Dorsolateral prefrontal cortex (tissue), 120 donors: ENCODE measurements at regions of chr18 and their contacts with region 1.

Region 1: DNA sequence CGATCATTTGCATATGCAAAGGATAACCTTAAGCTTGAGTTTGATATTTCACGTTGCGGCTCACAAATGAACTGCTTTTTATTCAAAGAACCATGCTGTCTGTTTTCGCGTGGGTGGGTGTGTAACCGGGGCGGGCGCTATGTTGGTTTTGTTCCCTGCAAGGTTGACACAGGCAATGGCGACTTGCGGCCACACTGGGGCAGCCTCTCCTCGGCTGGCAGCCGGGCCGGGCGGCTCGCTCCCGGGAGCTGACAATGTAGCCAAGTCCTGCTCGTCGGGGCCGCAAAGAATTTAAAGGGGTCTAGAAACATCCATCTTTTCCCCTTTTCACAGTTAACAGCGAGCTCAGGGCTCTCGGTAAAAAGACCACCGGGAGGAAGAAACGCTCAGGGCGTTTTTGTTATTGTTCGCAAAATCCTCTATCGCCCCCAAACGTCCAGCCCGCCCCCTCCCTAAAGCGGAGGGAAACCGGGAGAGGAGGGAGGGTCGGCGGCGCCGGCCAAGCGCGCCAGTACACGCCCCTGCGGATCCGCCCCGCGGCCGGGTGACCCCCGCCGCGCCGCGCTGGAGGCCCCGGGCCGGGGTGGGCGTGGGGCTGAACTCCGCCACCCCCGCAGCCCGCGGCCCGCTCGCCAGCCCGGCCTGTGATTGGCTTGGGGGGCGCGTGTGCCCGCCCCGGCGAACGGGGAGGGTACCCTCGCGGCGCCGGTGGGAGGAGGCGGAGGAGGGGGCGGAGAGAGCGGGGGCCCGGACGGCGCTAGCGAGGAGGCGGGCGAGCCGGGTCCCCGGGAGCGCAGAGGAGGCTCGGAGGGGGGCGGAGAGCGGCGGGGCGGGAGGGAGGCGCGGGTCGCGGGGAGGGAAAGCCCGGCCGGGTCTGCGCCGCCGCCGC is at the start of gene NEDD4L:
- DNase-seq: peak; percentile 69 to 91 (median 87)
- H3K4me3 ChIP-seq: peak within 1 kb of the TSS; percentile 60 to 90 (median 82)
- H3K27ac ChIP-seq: peak within 1 kb of the TSS in 57 of 59 donors; percentile 39 to 94 (median 85)
- H3K27me3 ChIP-seq: peaks cover 0 to 28% (median 0%) of the 10 kb centered on the region in 45 donors
- CTCF ChIP-seq: peak; percentile 58 to 96 (median 90)
- total RNA-seq, gene NEDD4L: 54.4 to 214 (median 149) TPM

Region 2: GRCh38 chr18:57630002-57630753 is 413.6 kb before region 1 on chr18:
- intact Hi-C with region 1: loop called (anchors 10 kb)
- DNase-seq: peak; percentile 95 to 98 (median 96)
- H3K4me3 ChIP-seq: peak overlapping the region; percentile 48 to 98 (median 79)
- H3K27ac ChIP-seq: peak overlapping the region; percentile 14 to 97 (median 86)
- H3K27me3 ChIP-seq: no peaks in the 10 kb centered on the region
- CTCF ChIP-seq: peak; percentile 38 to 90 (median 81)

Region 3: GRCh38 chr18:57915865-57916582 is 127.7 kb before region 1 on chr18:
- intact Hi-C with region 1: loop called (anchors 10 kb)
- DNase-seq: peak; percentile 58 to 87 (median 82)
- H3K4me3 ChIP-seq: no peak overlapping the region
- H3K27ac ChIP-seq: peak overlapping the region in 56 of 59 donors; percentile 8 to 87 (median 70)
- H3K27me3 ChIP-seq: no peaks in the 10 kb centered on the region
- CTCF ChIP-seq: peak in 10 of 56 donors; percentile 8 to 41 (median 18)

Region 4: DNA sequence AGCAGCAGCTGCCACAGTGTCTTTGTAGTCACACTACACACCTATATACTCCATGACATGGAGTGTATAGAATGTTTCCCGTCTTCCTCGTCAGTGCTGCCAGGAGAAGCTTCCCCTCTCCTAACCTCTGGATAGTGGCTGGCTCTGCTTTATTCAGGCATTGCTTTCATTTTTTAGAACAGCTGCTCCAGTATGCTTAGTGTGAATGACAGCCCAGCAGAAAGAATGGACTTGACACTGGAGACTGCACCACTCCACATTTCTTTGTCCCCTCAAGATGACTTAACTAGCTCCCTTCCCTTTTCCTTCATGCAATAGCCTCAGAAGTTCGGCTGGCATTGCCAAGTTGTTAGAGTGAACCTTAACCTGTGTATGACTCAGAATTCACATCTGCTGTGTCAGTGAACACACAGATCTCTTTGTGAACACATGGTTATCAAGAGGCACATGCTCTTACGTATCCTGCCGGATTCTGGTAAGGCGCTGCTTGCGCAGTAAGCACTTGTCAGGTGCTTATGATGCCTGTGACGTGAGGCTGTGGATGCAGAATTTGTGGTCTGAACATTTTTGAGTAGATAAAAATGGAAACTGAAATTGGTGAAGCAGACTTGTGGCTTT is 74.2 kb after region 1 on chr18:
- intact Hi-C with region 1: loop called (anchors 2 to 5 kb)
- DNase-seq: peak in 3 of 10 donors; percentile 23 to 63 (median 50)
- H3K4me3 ChIP-seq: no peak overlapping the region
- H3K27ac ChIP-seq: peak overlapping the region in 10 of 59 donors; percentile 14 to 51 (median 30)
- H3K27me3 ChIP-seq: peaks cover 0 to 14% (median 0%) of the 10 kb centered on the region in 45 donors
- CTCF ChIP-seq: no peak

Region 5: GRCh38 chr18:58180738-58181353 is 137.1 kb after region 1 on chr18:
- intact Hi-C with region 1: loop called in 1 of 2 experiments (anchors 5 kb)
- DNase-seq: peak in 3 of 10 donors; percentile 61 to 68 (median 65)
- H3K4me3 ChIP-seq: no peak overlapping the region
- H3K27ac ChIP-seq: no peak overlapping the region
- H3K27me3 ChIP-seq: no peaks in the 10 kb centered on the region
- CTCF ChIP-seq: peak; percentile 62 to 93 (median 82)

Region 6: GRCh38 chr18:58493516-58494253 is 449.9 kb after region 1 on chr18:
- intact Hi-C with region 1: loop called in 1 of 2 experiments (anchors 10 kb)
- DNase-seq: peak; percentile 43 to 85 (median 76)
- H3K4me3 ChIP-seq: peak overlapping the region in 46 of 59 donors; percentile 5 to 61 (median 32)
- H3K27ac ChIP-seq: peak overlapping the region in 39 of 59 donors; percentile 6 to 79 (median 55)
- H3K27me3 ChIP-seq: peaks cover 0 to 4% (median 0%) of the 10 kb centered on the region in 45 donors
- CTCF ChIP-seq: peak; percentile 71 to 96 (median 87)

Region 7: GRCh38 chr18:58748899-58749595 is 705.3 kb after region 1 on chr18:
- intact Hi-C with region 1: no loop called
- DNase-seq: no peak
- H3K4me3 ChIP-seq: no peak overlapping the region
- H3K27ac ChIP-seq: no peak overlapping the region
- H3K27me3 ChIP-seq: no peaks in the 10 kb centered on the region
- CTCF ChIP-seq: no peak